AG04449 (cell line): ENCODE measurements at regions of chr10 and their contacts with region 1.

Region 1: GRCh38 chr10:73644015-73644743 is 2.9 kb upstream of the MYOZ1 start:
- DNase-seq: no peak
- H3K4me3 ChIP-seq: no peak overlapping the region
- CTCF ChIP-seq: peak; percentile 69

Region 2: GRCh38 chr10:73517271-73517877 is 126.8 kb before region 1 on chr10:
- CTCF ChIA-PET with region 1: interaction called, 61 read pairs
- POLR2A ChIA-PET with region 1: no interaction called
- DNase-seq: no peak
- H3K4me3 ChIP-seq: no peak overlapping the region
- CTCF ChIP-seq: no peak

Region 3: DNA sequence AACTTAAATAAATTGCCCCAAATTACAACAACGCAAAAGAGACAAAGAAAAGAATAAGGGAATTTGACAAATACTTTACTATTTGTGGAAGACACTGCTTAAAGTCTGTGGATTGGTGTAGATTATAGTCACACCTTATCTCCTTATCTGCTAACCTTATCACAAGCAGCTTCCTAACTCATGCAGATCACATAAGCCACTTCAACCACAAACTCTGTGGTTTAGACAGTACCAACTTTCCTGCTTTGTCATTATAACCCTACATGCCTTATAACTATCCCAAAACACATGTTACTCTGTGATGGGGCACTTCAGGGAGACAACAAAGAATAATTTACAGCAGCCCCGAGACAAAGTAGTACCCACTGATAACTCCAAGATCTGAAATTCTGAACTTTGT is 106.9 kb before region 1 on chr10:
- CTCF ChIA-PET with region 1: interaction called, 560 read pairs
- POLR2A ChIA-PET with region 1: no interaction called
- DNase-seq: no peak
- H3K4me3 ChIP-seq: no peak overlapping the region
- CTCF ChIP-seq: no peak

Region 4: GRCh38 chr10:73625884-73626752 is 18.1 kb before region 1 on chr10:
- CTCF ChIA-PET with region 1: interaction called, 80 read pairs
- POLR2A ChIA-PET with region 1: no interaction called
- DNase-seq: peak; percentile 82
- H3K4me3 ChIP-seq: peak overlapping the region; percentile 91
- CTCF ChIP-seq: no peak

Region 5: DNA sequence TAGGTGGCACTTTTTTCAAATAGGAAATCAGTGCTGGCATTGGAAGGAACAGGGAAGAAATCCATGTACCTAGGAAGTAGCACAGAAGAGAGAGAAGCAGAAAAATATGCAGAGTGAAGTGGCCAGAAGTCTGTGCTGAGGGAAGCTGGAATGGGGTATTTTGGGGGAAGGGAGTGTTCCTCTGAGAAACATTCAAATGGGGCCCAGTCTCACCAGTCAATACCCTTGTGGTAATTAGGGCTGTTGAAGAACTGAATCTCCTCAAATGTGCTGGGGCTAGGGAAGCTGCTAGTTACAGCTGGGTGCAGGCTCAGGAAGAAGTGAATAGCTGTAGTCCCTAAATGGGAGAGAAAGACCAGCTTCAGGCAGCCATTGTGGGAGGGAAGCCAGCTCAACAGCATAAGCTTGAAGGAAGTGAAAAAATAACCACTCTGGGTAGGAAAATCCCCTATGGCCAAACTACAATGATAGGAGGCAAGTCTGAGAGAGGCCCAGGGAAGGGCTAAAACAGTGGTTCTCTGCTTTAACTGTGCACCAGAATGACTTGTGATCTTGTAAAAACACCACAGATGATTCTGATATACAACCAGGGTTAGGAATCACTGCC is 159.6 kb after region 1 on chr10:
- CTCF ChIA-PET with region 1: no interaction called
- POLR2A ChIA-PET with region 1: no interaction called
- DNase-seq: no peak
- H3K4me3 ChIP-seq: no peak overlapping the region
- CTCF ChIP-seq: no peak

Region 6: GRCh38 chr10:74058658-74059057 is 414.5 kb after region 1 on chr10:
- CTCF ChIA-PET with region 1: no interaction called
- POLR2A ChIA-PET with region 1: no interaction called
- DNase-seq: no peak
- H3K4me3 ChIP-seq: no peak overlapping the region
- CTCF ChIP-seq: no peak